ENCODE measurements at regions of chr21 and their contacts with region 1.

Region 1: DNA sequence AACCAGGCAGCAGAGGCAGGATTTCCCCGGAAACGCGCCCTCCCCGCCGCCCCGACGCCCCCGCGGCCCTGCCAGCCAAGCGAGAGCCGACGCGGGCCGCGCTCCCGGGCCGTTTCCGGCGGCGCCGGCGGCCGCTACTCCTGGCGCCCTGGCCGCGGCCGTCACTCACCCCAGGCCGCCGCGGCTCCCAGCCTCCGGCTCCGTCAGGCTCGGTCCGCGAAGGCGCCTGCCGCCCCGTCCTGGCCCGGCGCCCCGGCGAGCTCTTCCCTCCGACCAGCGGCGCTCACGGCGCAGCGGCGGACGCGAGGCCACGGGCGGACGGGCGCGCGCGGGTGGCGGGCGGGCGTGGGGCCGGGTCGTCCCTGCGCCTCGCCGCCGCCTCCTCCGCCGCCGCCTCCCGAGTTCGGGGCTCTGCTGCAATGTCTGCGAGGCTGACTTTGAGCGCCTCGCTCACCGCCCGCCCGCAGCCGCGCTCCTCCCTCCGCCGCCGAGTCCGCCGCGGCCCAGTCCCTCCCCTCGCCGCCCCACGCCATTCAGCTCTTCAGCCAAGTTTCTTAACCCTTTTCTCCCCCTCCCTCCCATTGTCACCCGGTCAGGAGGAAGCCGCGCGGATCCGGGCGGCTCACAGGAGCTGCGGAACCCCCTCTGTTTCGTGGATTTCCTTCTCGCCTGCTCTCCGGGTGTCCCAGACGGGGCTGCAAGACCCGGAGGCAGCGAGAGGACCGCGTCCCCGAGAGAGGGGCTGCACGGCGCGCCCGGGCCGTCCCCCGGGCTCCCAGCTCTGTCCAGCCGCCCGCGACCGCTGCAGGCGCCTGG is at the start of gene NRIP1:
- DNase-seq: peak; percentile 95
- H3K4me3 Mint-ChIP-seq: peak within 1 kb of the TSS; percentile 95
- H3K27ac Mint-ChIP-seq: peak within 1 kb of the TSS; percentile 95
- H3K4me1 Mint-ChIP-seq: peaks cover 45% of the 10 kb centered on the region
- H3K27me3 Mint-ChIP-seq: peaks cover 28% of the 10 kb centered on the region
- total RNA-seq, gene NRIP1: 10.1 and 10.2 TPM in 2 replicates

Region 2: GRCh38 chr21:14533504-14534428 is 531.0 kb before region 1 on chr21:
- intact Hi-C with region 1: loop called (anchors 5 kb)
- DNase-seq: peak; percentile 79
- H3K4me3 Mint-ChIP-seq: peak overlapping the region; percentile 85
- H3K27ac Mint-ChIP-seq: peak overlapping the region; percentile 100
- H3K4me1 Mint-ChIP-seq: peaks cover 59% of the 10 kb centered on the region
- H3K27me3 Mint-ChIP-seq: no peaks in the 10 kb centered on the region

Region 3: DNA sequence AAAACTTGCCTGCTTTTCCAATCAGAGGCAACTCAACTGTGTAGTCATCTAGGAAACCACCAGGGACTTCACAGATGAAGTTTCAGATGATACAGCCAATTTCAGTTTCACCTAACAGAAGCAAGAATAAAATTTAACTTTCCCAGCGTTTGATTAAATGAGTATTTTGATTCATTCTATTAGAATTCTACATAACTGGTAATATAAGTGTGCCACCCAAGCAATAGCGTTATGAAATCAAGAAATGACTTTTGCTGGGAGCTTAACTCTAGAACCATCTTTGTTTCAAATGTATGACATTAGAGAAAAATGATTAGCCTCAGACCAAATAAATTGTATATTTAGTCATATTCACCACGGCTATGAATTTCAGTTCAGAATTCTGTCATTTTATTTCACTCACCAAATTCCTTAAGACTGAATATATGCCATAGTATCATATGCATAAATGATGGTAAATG is 239.2 kb before region 1 on chr21:
- intact Hi-C with region 1: loop called (anchors 5 kb)
- DNase-seq: no peak
- H3K4me3 Mint-ChIP-seq: no peak overlapping the region
- H3K27ac Mint-ChIP-seq: no peak overlapping the region
- H3K4me1 Mint-ChIP-seq: peaks cover 4% of the 10 kb centered on the region
- H3K27me3 Mint-ChIP-seq: peaks cover 2% of the 10 kb centered on the region

Region 4: DNA sequence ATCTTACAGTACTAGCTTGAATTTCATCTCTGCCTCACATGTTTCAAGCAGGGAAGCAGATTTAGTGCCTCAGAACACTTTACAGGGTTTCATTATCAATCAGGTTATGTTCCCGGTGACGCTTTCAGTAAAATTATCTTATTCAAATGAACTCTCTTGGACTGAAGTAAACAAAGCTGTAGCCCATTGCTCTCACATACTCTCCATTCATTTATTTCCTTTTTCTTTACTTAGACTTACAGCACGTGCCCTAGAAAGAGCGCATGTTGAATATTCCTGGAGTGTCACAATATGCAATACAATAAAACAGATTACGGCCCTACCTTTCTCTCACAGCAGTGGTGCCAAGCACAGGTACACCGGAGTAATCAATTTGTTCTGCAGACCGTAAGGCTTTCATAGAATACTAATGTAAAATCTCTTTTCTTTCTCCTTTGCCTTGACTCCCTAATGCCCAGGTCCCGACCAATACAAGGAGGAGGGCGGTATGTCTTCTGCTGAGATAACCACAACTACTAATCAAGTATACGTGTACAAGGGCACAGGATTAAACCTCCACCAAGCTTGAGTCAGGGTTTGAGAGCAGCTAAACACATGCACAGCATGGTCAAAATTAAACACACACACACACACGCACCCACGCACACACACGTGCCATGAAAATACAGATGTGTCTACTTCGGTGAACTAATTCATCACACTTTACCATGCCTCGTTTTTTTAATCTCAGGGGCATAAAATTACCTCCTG is 62.8 kb before region 1 on chr21:
- intact Hi-C with region 1: loop called (anchors 5 kb)
- DNase-seq: no peak
- H3K4me3 Mint-ChIP-seq: no peak overlapping the region
- H3K27ac Mint-ChIP-seq: no peak overlapping the region
- H3K4me1 Mint-ChIP-seq: peaks cover 33% of the 10 kb centered on the region
- H3K27me3 Mint-ChIP-seq: no peaks in the 10 kb centered on the region

Region 5: DNA sequence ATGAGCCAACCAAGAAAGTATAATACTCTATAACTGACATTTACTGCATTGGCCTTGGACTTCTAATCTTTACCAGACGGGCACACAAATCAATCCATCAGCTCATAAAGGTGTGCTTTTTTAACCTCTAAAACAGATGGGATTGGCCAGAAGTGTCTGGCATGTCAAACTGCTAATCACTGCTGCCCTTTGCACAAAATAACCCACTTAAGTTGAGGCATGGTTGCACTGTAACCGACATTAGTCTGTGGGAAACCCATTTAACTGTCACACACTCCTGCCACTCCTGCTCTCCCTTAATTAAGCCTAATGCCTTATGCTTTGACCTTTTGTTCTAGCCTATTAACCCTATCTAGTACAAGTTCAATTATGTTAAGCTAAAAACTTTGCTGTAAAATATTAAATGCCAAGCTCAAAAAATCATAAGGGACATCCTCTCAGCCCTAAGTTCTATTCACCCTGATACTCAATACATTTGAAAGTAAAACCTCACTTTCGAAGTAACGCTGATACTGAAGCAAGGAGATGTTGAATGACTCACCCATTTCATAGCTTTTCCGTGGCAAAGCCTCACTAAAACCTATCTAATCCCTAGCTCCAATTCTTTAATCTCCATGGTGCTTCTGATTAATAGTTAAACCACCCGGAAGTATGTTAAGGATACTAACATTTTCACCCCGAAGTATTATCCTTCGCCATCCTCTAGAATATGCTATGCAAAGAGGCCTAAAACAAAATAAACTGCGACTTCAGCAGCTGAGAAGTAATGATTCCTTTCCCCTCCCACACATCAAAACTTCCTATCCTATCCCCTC is 12.9 kb before region 1 on chr21:
- intact Hi-C with region 1: loop called (anchors 1 kb)
- DNase-seq: no peak
- H3K4me3 Mint-ChIP-seq: peak overlapping the region; percentile 76
- H3K27ac Mint-ChIP-seq: peak overlapping the region; percentile 77
- H3K4me1 Mint-ChIP-seq: peaks cover 48% of the 10 kb centered on the region
- H3K27me3 Mint-ChIP-seq: no peaks in the 10 kb centered on the region

Region 6: DNA sequence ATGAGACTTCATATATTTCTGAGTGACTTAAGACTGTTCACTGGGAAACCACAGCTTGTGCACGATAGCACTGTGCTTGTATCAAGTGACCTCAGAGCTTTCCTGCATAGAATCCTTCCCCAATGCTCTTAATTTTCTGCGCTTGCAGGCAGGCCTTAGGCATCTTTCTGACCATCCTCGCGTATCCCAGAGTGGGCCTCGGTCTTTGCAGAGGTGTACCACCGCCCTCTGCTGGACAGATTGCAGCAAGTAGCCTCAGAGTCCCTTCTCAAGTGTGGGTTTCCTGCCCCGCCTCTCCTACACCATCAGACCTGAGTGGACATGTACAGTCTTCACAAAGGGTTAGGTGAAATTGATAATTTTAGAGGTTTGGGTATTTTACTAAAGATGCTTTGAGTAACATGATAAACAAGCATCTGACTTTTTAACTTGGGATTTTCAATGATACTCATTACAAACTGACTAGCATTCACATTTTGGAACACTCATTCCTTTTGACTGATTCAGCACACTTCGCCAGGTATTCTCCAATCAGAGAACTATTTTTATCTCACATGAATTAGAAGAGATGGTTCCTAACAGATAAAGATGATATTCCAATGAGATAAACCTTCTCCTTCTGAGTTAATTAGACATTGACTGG is 418.5 kb after region 1 on chr21:
- intact Hi-C with region 1: loop called (anchors 1 kb)
- DNase-seq: peak; percentile 92
- H3K4me3 Mint-ChIP-seq: no peak overlapping the region
- H3K27ac Mint-ChIP-seq: no peak overlapping the region
- H3K4me1 Mint-ChIP-seq: peaks cover 17% of the 10 kb centered on the region
- H3K27me3 Mint-ChIP-seq: peaks cover 3% of the 10 kb centered on the region